SK-N-SH (cell line): ENCODE measurements at regions of chr9 and their contacts with region 1.

Region 1: GRCh38 chr9:100322954-100323536 is 29.7 kb downstream of the TEX10 start:
- DNase-seq: peak; percentile 27
- H3K4me3 ChIP-seq: no peak overlapping the region; a peak in 1 of 4 replicates
- H3K27ac ChIP-seq: no peak overlapping the region
- H3K4me1 ChIP-seq: no peaks in the 10 kb centered on the region
- H3K27me3 ChIP-seq: no peaks in the 10 kb centered on the region
- CTCF ChIP-seq: peak; percentile 87
- EP300 ChIP-seq: no peak
- RAD21 ChIP-seq: peak; percentile 71

Region 2: DNA sequence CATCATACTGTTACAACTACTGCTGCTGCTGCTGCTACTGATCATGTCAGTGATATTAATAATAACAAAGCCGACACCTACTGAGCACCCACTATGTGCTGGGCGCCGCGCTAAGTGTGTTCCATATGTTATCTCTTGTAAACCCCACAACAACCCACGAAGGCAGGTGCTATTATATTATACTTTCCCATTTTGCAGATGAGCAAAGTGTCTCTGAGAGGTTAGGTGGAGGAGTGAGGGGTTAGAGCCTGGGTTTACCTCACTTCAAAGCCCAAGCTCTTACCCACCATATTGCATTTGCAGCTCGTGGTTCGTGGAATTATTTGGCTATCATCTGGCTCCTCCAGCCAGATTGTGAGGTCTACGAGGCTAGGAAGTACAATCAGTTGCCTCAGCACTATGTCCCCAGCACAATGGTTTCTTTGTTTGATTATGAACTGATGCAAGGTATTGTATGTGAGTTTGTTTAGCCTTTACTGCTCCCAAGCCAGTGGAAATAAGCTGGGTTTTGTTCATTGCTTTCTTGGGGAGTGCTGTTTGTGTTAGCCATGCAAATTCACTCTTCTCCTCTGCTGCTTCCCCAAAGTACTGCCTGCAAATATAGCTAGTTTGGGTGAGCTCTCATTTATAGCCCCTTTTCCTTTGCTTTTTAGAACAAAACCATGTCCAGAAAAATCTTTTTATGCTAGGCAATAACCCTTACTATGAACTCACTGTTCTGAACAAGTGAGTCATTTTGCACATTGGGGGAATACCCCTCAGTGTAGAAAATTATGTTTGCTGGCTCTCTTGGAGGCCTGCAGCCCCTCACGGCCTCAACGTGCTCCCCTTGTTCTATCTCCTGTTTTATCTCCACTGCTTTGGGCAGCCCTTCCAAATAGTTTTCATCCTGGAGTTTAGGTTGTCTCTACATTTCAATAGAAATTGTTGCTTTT is 1149.2 kb before region 1 on chr9:
- CTCF ChIA-PET with region 1: interaction called, 10 read pairs
- POLR2A ChIA-PET with region 1: no interaction called
- DNase-seq: no peak
- H3K4me3 ChIP-seq: no peak overlapping the region
- H3K27ac ChIP-seq: no peak overlapping the region
- H3K4me1 ChIP-seq: peaks cover 0 to 48% of the 10 kb centered on the region in 2 experiments; a peak in 2 of 4 replicates
- H3K27me3 ChIP-seq: no peaks in the 10 kb centered on the region
- CTCF ChIP-seq: no peak
- EP300 ChIP-seq: no peak
- RAD21 ChIP-seq: no peak

Region 3: DNA sequence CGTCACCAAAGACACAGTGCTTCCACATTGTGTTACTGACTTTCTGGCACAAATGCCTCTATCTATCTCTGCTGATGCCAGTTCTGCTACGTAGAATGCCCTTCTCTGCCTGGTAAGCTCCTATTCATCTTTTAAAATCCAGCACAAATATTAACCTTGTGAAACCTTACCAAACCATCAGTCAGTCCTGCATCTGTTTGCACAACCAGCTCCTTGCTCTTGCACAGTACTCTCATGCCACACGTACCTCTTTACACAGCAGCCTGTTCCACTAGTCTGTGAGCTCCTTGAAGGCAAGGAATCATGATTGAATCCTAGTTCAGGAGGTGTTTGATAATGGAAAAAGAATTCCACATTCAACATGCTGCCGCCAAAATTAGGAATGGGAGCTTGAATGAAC is 26.6 kb before region 1 on chr9:
- CTCF ChIA-PET with region 1: interaction called, 12 read pairs
- POLR2A ChIA-PET with region 1: no interaction called
- DNase-seq: no peak
- H3K4me3 ChIP-seq: no peak overlapping the region
- H3K27ac ChIP-seq: no peak overlapping the region
- H3K4me1 ChIP-seq: no peaks in the 10 kb centered on the region; a peak in 2 of 4 replicates
- H3K27me3 ChIP-seq: no peaks in the 10 kb centered on the region
- CTCF ChIP-seq: no peak
- EP300 ChIP-seq: no peak
- RAD21 ChIP-seq: no peak

Region 4: DNA sequence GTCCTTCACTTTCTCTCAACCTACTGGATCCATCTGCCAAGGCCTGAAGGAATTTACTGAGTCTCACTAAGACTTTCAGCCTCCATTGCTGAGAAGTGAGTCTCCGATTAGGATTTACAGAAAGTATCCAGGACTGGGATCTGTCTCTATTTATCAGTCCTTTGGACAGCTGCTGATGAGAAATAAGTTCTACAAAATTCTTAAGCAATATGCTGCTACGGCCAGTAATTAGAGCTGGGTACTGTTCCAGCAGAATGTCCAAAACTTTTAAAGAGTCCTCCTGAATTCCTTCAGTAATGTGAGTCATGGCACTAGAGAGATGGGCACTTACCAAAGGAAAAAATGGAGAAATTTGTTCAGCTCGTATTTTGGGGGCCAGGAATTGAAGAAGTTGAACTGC is 23.8 kb after region 1 on chr9:
- CTCF ChIA-PET with region 1: interaction called, 22 read pairs
- POLR2A ChIA-PET with region 1: no interaction called
- DNase-seq: no peak
- H3K4me3 ChIP-seq: no peak overlapping the region
- H3K27ac ChIP-seq: peak overlapping the region in 1 of 2 experiments; percentile 30; a peak in 1 of 4 replicates
- H3K4me1 ChIP-seq: peaks cover 7 to 22% of the 10 kb centered on the region in 2 experiments; a peak in 3 of 4 replicates
- H3K27me3 ChIP-seq: no peaks in the 10 kb centered on the region
- CTCF ChIP-seq: no peak
- EP300 ChIP-seq: no peak
- RAD21 ChIP-seq: no peak

Region 5: GRCh38 chr9:100417815-100418214 is 94.8 kb after region 1 on chr9:
- CTCF ChIA-PET with region 1: no interaction called
- POLR2A ChIA-PET with region 1: no interaction called
- DNase-seq: no peak
- H3K4me3 ChIP-seq: no peak overlapping the region
- H3K27ac ChIP-seq: no peak overlapping the region
- H3K4me1 ChIP-seq: no peaks in the 10 kb centered on the region
- H3K27me3 ChIP-seq: no peaks in the 10 kb centered on the region
- CTCF ChIP-seq: no peak
- EP300 ChIP-seq: no peak
- RAD21 ChIP-seq: no peak

Region 6: GRCh38 chr9:100587375-100587774 is 264.3 kb after region 1 on chr9:
- CTCF ChIA-PET with region 1: interaction called, 10 read pairs
- POLR2A ChIA-PET with region 1: no interaction called
- DNase-seq: no peak
- H3K4me3 ChIP-seq: no peak overlapping the region
- H3K27ac ChIP-seq: peak overlapping the region in 1 of 2 experiments; percentile 49; a peak in 2 of 4 replicates
- H3K4me1 ChIP-seq: peaks cover 0 to 30% of the 10 kb centered on the region in 2 experiments; a peak in 1 of 4 replicates
- H3K27me3 ChIP-seq: no peaks in the 10 kb centered on the region
- CTCF ChIP-seq: no peak
- EP300 ChIP-seq: peak in 1 of 2 experiments; percentile 24; a peak in 1 of 4 replicates
- RAD21 ChIP-seq: no peak